Panc1 (cell line): ENCODE measurements at regions of chr3 and their contacts with region 1.

Region 1: DNA sequence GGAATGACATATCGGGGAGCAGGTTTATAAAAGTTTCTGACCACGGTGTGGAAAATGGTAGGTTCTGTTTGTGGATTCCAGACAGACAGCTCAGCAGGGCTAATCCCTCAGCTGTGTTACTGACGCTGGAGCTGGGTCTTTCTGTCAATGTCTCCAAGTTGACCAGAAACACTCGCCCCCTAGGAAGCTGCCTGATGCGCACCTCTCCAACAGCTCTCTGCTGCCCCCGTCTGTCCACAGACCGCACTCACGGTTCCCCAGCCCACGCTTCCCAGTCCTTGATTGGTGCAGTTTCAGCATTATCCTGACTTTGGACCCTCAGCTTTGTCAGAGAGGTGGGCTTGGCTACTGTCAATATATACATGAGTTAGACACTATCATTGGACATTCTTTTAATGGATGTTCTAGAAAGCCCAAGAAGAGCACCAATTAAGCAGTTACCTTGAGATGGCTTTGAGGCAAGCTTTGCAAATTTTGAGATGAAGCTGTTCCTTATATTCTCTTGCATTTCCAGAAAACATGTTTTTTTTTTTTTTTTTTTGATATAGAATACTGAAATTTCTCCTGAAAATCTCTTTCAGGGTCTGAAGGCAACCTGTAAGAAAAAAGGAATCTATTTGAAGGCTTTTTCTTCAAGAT is 98.9 kb upstream of the TBC1D5 start:
- DNase-seq: peak; percentile 61
- ATAC-seq: peak; percentile 93
- H3K4me3 ChIP-seq: no peak overlapping the region
- H3K27ac ChIP-seq: no peak overlapping the region
- H3K4me1 ChIP-seq: no peaks in the 10 kb centered on the region
- H3K27me3 ChIP-seq: 0 out of 2 replicates have a peak, but pooled peaks cover 2% of the 10 kb centered on the region
- CTCF ChIP-seq: peak; percentile 92

Region 2: GRCh38 chr3:17431004-17431403 is 410.3 kb before region 1 on chr3:
- CTCF ChIA-PET with region 1: no interaction called
- POLR2A ChIA-PET with region 1: no interaction called
- in situ Hi-C with region 1: no loop called
- intact Hi-C with region 1: loop called (anchors 2 kb)
- DNase-seq: peak; percentile 7
- ATAC-seq: no peak
- H3K4me3 ChIP-seq: no peak overlapping the region
- H3K27ac ChIP-seq: no peak overlapping the region
- H3K4me1 ChIP-seq: no peaks in the 10 kb centered on the region
- H3K27me3 ChIP-seq: no peaks in the 10 kb centered on the region
- CTCF ChIP-seq: peak; percentile 18; the same call in 1 of the 2 replicates

Region 3: GRCh38 chr3:17639765-17640164 is 201.5 kb before region 1 on chr3:
- CTCF ChIA-PET with region 1: interaction called, 6 read pairs
- POLR2A ChIA-PET with region 1: interaction called, 3 read pairs
- in situ Hi-C with region 1: no loop called
- intact Hi-C with region 1: loop called (anchors 5 kb)
- DNase-seq: peak; percentile 57
- ATAC-seq: no peak
- H3K4me3 ChIP-seq: no peak overlapping the region
- H3K27ac ChIP-seq: no peak overlapping the region
- H3K4me1 ChIP-seq: no peaks in the 10 kb centered on the region
- H3K27me3 ChIP-seq: no peaks in the 10 kb centered on the region
- CTCF ChIP-seq: no peak